Ascending aorta (tissue), 2 donors: ENCODE measurements at regions of chr3 and their contacts with region 1.

Region 1: GRCh38 chr3:52278510-52279069 is at the start of gene WDR82:
- DNase-seq: peak; percentile 82 to 97
- H3K4me3 ChIP-seq: peak within 1 kb of the TSS; percentile 81 to 91
- H3K27ac ChIP-seq: peak within 1 kb of the TSS; percentile 94 to 97
- H3K4me1 ChIP-seq: peaks cover 11 to 43% of the 10 kb centered on the region in 2 donors
- H3K27me3 ChIP-seq: no peaks in the 10 kb centered on the region
- CTCF ChIP-seq: peak; percentile 48 to 54 (median 49)
- total RNA-seq, gene WDR82: 42.0 TPM

Region 2: DNA sequence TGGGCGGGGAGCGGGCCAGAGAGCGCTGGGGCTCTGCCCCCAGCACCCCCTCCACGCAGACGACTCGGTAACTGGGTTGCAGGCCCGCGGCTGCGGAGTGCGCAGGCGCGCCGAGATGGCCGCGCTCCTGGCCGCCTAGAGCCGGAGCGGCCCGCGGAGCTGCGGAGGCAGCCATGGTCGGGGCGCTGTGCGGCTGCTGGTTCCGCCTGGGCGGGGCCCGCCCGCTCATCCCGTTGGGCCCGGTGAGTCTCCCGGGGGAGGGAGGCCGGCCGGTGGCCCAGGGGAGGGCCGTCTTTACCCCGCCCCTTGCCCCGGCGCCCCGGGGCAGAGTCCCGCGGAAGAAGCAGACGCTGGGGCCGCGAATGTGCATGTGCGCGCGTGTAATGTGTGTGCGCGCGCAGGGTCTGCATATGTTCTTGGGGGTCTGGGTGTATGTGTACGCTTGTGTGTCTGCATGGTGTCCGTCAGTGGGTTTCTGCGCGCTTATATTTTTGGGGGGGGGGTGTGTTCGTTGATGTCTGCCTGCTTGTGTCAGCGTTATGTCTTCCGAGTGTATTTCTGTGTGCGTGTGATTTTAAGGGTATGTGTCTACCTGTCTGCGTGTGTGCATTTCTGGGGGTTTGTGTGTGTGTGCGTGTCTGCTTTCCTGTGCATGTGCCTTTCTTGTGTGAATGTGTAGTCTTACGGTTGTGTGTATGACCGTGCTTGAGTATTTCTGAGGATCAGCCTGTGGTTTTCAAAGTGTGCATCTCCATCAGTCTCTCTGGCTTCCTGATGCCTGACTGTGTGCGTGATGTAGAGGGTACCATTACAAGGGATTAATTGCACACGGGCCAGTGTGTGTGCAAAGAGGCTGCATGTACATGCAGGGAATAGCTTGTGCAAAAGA is 303.4 kb before region 1 on chr3 and contains the start of gene ABHD14A:
- intact Hi-C with region 1: loop called (anchors 10 kb)
- DNase-seq: peak in 1 of 2 donors; percentile 84
- H3K4me3 ChIP-seq: peak within 1 kb of the TSS; percentile 74 to 86
- H3K27ac ChIP-seq: peak within 1 kb of the TSS; percentile 96
- H3K4me1 ChIP-seq: peaks cover 6 to 17% of the 10 kb centered on the region in 2 donors
- H3K27me3 ChIP-seq: no peaks in the 10 kb centered on the region
- CTCF ChIP-seq: no peak
- total RNA-seq, gene ABHD14A: 37.4 TPM

Region 3: GRCh38 chr3:52406231-52406661 is 127.7 kb after region 1 on chr3:
- intact Hi-C with region 1: loop called (anchors 5 kb)
- DNase-seq: no peak
- H3K4me3 ChIP-seq: no peak overlapping the region
- H3K27ac ChIP-seq: no peak overlapping the region
- H3K4me1 ChIP-seq: peaks cover 8 to 12% of the 10 kb centered on the region in 2 donors
- H3K27me3 ChIP-seq: no peaks in the 10 kb centered on the region
- CTCF ChIP-seq: no peak